CD4-positive, alpha-beta T cell (primary cell): ENCODE measurements at regions of chr10 and their contacts with region 1.

Region 1: DNA sequence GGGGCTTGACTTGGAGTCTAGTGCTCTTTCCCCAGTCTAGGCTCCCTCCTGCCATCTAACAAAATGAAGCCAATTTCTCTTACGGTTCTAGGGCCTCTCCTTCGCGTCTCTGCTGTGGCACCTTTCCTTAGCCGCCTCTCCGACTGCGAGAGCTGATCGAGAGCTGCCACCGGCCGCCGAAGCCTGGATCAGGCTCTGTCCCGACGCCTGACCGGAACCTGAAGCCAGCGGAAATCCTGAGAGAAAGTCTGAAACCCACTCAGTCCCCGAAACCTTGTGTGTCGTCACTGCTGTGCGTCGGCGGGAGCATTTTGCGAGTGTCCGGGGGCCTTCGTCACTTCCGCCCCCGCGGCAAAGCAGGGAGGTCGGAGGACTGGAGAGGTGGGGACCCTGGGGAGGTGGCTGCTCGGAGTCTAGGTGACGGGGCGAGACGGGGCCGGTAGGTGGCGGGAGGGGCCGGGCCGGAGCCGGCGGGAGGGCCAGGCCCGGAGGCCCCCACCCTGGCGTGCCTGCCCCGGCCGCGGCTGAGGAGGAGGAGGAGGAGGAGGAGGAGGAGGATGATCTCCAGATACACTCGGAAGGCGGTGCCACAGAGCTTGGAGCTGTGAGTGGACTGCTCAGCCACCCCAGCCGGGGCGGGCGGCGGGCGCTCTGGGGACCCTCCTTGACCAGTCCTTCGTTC is at the starts of genes ECD and FAM149B1:
- DNase-seq: peak; percentile 79 to 96 (median 86)
- ATAC-seq: peak; percentile 92
- H3K4me3 ChIP-seq: peak within 1 kb of the TSS; percentile 90
- H3K4me3 Mint-ChIP-seq: peak within 1 kb of the TSS; percentile 94
- H3K27ac ChIP-seq: peak within 1 kb of the TSS; percentile 96 to 97
- H3K27ac Mint-ChIP-seq: peak within 1 kb of the TSS; percentile 98
- H3K4me1 ChIP-seq: peaks cover 13% of the 10 kb centered on the region
- H3K4me1 Mint-ChIP-seq: peaks cover 45% of the 10 kb centered on the region
- H3K27me3 ChIP-seq: no peaks in the 10 kb centered on the region
- H3K27me3 Mint-ChIP-seq: no peaks in the 10 kb centered on the region
- CTCF ChIP-seq: no peak
- total RNA-seq, gene ECD: 50.5 to 57.7 TPM
- total RNA-seq, gene FAM149B1: 7.0 to 7.7 TPM

Region 2: DNA sequence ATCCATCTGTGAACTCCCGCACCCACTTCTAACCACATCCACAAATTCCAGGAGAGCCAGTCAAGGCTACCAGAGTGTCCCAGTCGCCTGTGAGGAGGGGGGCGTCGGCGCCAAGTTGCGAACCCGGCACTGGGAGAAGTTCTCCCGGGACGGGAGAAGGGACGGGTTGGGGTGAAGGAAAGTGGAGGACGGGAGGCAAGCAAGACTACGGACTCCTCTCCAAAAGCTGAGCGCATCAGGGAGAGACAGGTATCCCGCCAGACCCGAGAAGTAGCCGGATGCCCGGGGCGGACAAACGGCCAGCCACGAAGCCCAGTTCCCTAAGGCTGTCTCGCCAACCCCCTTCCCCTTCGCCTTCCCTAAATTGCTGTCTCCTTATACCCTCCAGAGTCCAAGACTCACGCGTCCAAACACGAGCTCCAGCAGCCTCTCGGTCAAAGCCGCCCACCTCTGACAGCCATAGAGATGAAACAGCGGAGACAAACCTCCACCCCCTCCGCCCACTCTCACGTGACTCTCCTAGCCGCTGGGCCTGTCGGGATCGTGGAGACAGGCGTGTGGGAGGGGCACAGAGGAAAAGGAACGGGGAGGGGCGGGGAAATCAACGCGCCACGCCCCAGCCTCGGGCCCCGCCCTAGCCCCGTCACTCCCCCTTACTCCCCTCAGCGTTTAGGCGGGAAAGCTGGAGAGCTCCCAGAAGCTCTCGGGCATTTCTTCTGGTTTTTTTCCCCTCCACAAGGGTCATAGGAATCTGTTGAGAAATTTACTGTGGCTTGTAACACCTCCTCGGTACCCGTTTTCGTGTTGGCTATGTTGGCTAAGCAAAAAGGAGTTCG is 542.1 kb before region 1 on chr10 and contains the start of gene MICU1:
- CTCF ChIA-PET with region 1: no interaction called
- POLR2A ChIA-PET with region 1: no interaction called
- intact Hi-C with region 1: loop called in 1 of 2 experiments (anchors 5 kb)
- DNase-seq: peak; percentile 85 to 97 (median 92)
- ATAC-seq: peak; percentile 99
- H3K4me3 ChIP-seq: peak within 1 kb of the TSS; percentile 92
- H3K4me3 Mint-ChIP-seq: peak within 1 kb of the TSS; percentile 99
- H3K27ac ChIP-seq: peak within 1 kb of the TSS; percentile 15 to 42
- H3K27ac Mint-ChIP-seq: peak within 1 kb of the TSS; percentile 83
- H3K4me1 ChIP-seq: peaks cover 16% of the 10 kb centered on the region
- H3K4me1 Mint-ChIP-seq: peaks cover 26% of the 10 kb centered on the region
- H3K27me3 ChIP-seq: no peaks in the 10 kb centered on the region
- H3K27me3 Mint-ChIP-seq: no peaks in the 10 kb centered on the region
- CTCF ChIP-seq: no peak
- total RNA-seq, gene MICU1: 9.4 to 12.1 TPM

Region 3: GRCh38 chr10:72889391-72889831 is 278.5 kb before region 1 on chr10:
- CTCF ChIA-PET with region 1: no interaction called
- POLR2A ChIA-PET with region 1: no interaction called
- intact Hi-C with region 1: no loop called
- DNase-seq: no peak
- ATAC-seq: no peak
- H3K4me3 ChIP-seq: no peak overlapping the region
- H3K4me3 Mint-ChIP-seq: no peak overlapping the region
- H3K27ac ChIP-seq: no peak overlapping the region
- H3K27ac Mint-ChIP-seq: no peak overlapping the region
- H3K4me1 ChIP-seq: peaks cover 3% of the 10 kb centered on the region
- H3K4me1 Mint-ChIP-seq: peaks cover 14% of the 10 kb centered on the region
- H3K27me3 ChIP-seq: no peaks in the 10 kb centered on the region
- H3K27me3 Mint-ChIP-seq: peaks cover 8% of the 10 kb centered on the region
- CTCF ChIP-seq: no peak

Region 4: GRCh38 chr10:73017955-73018480 is 149.9 kb before region 1 on chr10:
- CTCF ChIA-PET with region 1: no interaction called
- POLR2A ChIA-PET with region 1: no interaction called
- intact Hi-C with region 1: no loop called
- DNase-seq: no peak
- ATAC-seq: no peak
- H3K4me3 ChIP-seq: no peak overlapping the region
- H3K4me3 Mint-ChIP-seq: no peak overlapping the region
- H3K27ac ChIP-seq: no peak overlapping the region
- H3K27ac Mint-ChIP-seq: no peak overlapping the region
- H3K4me1 ChIP-seq: no peaks in the 10 kb centered on the region
- H3K4me1 Mint-ChIP-seq: no peaks in the 10 kb centered on the region
- H3K27me3 ChIP-seq: no peaks in the 10 kb centered on the region
- H3K27me3 Mint-ChIP-seq: no peaks in the 10 kb centered on the region
- CTCF ChIP-seq: no peak

Region 5: DNA sequence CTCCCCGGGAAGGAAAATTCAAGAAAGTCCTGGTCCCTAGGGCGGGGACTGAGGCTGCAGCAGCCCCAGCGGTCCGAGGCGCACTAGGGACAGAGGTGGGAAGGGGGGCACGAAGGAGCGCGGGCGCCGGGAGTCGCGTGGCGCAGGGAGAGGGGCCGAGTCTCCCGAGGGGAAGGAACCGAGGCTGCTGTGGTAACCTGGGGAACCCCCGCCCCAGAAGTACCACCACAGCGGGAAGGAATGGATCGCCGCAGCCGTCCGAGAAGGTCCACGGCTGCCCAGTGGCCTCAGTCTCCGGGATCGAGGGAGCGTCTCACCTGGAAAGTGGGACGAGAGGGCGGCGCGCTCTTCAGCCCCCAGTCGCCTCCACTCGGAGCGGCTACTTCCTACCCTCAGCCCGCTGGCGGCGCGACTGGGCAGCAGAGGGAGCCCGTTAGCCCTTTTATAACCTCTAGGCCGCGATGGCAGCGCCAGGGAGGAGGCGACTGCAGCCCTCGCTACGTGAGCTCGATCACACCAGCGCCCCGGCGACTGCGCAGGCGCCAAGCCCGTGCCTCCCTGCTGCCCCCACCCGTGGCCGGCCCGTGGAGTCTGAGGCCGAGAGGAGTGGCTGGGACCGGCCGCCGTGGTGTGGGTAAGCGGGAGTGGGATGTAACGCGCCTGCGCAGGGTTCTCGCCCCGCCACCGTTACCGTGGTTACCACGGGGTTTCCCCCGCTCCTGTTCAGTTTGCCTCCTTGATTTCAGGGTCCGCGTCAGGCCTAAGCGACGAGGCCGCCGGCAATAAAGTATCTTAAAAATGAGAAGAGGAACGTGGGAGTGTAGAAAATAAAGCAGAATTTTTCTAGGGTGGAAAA is 71.2 kb before region 1 on chr10 and contains the start of gene P4HA1:
- CTCF ChIA-PET with region 1: interaction called, 7 read pairs
- POLR2A ChIA-PET with region 1: interaction called, 41 read pairs
- intact Hi-C with region 1: loop called in 1 of 2 experiments (anchors 2 kb)
- DNase-seq: peak; percentile 93 to 100 (median 97)
- ATAC-seq: peak; percentile 84
- H3K4me3 ChIP-seq: peak within 1 kb of the TSS; percentile 97
- H3K4me3 Mint-ChIP-seq: peak within 1 kb of the TSS; percentile 94
- H3K27ac ChIP-seq: peak within 1 kb of the TSS; percentile 89 to 98
- H3K27ac Mint-ChIP-seq: peak within 1 kb of the TSS; percentile 87
- H3K4me1 ChIP-seq: peaks cover 7% of the 10 kb centered on the region
- H3K4me1 Mint-ChIP-seq: peaks cover 41% of the 10 kb centered on the region
- H3K27me3 ChIP-seq: no peaks in the 10 kb centered on the region
- H3K27me3 Mint-ChIP-seq: no peaks in the 10 kb centered on the region
- CTCF ChIP-seq: peak; percentile 79
- total RNA-seq, gene P4HA1: 9.0 to 9.1 TPM

Region 6: DNA sequence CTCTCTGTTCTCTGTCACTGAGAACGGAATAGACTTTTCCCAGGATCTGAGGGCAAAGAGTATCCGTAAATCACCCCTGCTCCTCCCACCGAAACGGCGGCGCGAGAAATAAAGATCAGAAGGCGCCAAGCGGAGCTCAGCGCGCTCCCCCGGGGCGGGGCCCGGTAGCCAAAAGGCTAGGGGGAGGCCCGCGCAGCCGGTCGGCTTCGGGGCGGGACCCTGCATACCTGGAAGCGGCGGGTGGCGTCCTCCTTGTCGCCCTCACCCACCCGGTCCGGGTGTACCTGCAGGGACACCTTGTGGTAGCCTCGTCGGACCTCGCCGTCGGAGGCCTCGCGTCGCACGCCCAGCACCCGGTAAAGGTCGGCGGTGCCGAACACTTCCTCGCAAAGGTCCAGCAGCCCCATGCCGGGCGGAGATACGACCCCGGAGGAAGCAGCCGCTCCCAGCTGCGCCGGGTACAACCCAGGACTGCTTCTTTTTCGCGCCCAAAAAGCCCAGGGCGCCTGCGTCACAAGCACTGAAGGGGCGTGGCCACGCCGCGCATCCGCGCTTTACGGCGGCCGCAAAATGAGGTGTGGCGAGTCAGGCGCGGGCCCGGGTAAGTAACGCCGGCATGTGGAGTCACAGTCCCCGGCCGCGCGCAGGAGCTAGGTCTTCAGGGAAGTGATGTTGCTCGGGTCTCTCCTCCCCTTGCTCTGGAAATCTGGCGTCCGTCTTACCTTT is 79.0 kb after region 1 on chr10 and contains the start of gene DNAJC9:
- CTCF ChIA-PET with region 1: no interaction called
- POLR2A ChIA-PET with region 1: interaction called, 9 read pairs
- intact Hi-C with region 1: loop called (anchors 2 to 5 kb)
- DNase-seq: peak; percentile 94 to 99 (median 97)
- ATAC-seq: peak; percentile 85
- H3K4me3 ChIP-seq: peak within 1 kb of the TSS; percentile 81
- H3K4me3 Mint-ChIP-seq: peak within 1 kb of the TSS; percentile 96
- H3K27ac ChIP-seq: peak within 1 kb of the TSS; percentile 81 to 94
- H3K27ac Mint-ChIP-seq: peak within 1 kb of the TSS; percentile 86
- H3K4me1 ChIP-seq: peaks cover 26% of the 10 kb centered on the region
- H3K4me1 Mint-ChIP-seq: peaks cover 68% of the 10 kb centered on the region
- H3K27me3 ChIP-seq: no peaks in the 10 kb centered on the region
- H3K27me3 Mint-ChIP-seq: no peaks in the 10 kb centered on the region
- CTCF ChIP-seq: no peak
- total RNA-seq, gene DNAJC9: 15.4 to 15.8 TPM

Region 7: GRCh38 chr10:73625884-73626752 is 458.2 kb after region 1 on chr10:
- CTCF ChIA-PET with region 1: no interaction called
- POLR2A ChIA-PET with region 1: no interaction called
- intact Hi-C with region 1: loop called in 1 of 2 experiments (anchors 5 kb)
- DNase-seq: peak; percentile 84 to 99 (median 90)
- ATAC-seq: peak; percentile 94
- H3K4me3 ChIP-seq: peak overlapping the region; percentile 68
- H3K4me3 Mint-ChIP-seq: peak overlapping the region; percentile 91
- H3K27ac ChIP-seq: peak overlapping the region; percentile 62 to 66
- H3K27ac Mint-ChIP-seq: peak overlapping the region; percentile 90
- H3K4me1 ChIP-seq: peaks cover 17% of the 10 kb centered on the region
- H3K4me1 Mint-ChIP-seq: peaks cover 25% of the 10 kb centered on the region
- H3K27me3 ChIP-seq: no peaks in the 10 kb centered on the region
- H3K27me3 Mint-ChIP-seq: no peaks in the 10 kb centered on the region
- CTCF ChIP-seq: no peak